Calu3 (cell line): ENCODE measurements at regions of chr17 and their contacts with region 1.

Region 1: GRCh38 chr17:58669853-58670252 is 22.0 kb downstream of the TEX14 start:
- DNase-seq: no peak
- H3K4me3 Mint-ChIP-seq: no peak overlapping the region
- H3K27ac Mint-ChIP-seq: no peak overlapping the region
- H3K4me1 Mint-ChIP-seq: peaks cover 15% of the 10 kb centered on the region
- H3K27me3 Mint-ChIP-seq: no peaks in the 10 kb centered on the region
- CTCF ChIP-seq: no peak

Region 2: GRCh38 chr17:58680038-58680369 is 10.2 kb after region 1 on chr17:
- CTCF ChIA-PET with region 1: no interaction called
- intact Hi-C with region 1: no loop called
- DNase-seq: no peak
- H3K4me3 Mint-ChIP-seq: no peak overlapping the region
- H3K27ac Mint-ChIP-seq: no peak overlapping the region
- H3K4me1 Mint-ChIP-seq: no peaks in the 10 kb centered on the region
- H3K27me3 Mint-ChIP-seq: no peaks in the 10 kb centered on the region
- CTCF ChIP-seq: no peak

Region 3: DNA sequence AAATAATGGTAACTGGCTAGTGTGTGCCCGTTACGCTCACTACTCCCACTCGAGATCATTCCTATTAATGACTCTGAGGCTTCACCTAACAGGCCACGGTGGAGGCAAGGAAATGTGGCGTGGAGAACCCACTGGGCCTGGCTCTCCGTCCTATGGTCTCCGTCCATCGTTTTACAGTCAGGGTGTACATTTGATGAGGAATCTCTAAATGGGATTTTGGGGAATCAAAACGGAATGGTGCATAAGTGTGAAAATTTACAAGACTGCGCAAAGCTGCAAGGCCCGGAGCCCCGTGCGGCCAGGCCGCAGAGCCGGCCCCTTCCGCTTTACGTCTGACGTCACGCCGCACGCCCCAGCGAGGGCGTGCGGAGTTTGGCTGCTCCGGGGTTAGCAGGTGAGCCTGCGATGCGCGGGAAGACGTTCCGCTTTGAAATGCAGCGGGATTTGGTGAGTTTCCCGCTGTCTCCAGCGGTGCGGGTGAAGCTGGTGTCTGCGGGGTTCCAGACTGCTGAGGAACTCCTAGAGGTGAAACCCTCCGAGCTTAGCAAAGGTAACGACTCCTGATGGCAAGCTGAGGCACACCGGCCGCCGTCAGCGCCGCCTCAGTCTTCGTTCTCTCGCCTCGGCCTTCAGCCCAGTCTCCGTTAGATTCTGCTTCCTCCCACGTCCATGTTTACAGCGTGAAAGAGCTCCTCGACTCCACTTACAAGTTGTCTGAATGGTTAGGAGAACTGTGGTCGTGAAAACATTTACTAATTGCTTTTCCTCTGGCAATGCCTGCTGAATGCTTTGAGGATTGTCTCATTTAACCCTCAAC is 22.6 kb after region 1 on chr17 and contains the start of gene RAD51C:
- CTCF ChIA-PET with region 1: interaction called, 13 read pairs
- intact Hi-C with region 1: no loop called
- DNase-seq: peak; percentile 78
- H3K4me3 Mint-ChIP-seq: peak within 1 kb of the TSS; percentile 86
- H3K27ac Mint-ChIP-seq: peak within 1 kb of the TSS; percentile 88
- H3K4me1 Mint-ChIP-seq: no peaks in the 10 kb centered on the region
- H3K27me3 Mint-ChIP-seq: no peaks in the 10 kb centered on the region
- CTCF ChIP-seq: no peak
- total RNA-seq, gene RAD51C: 24.3 and 28.4 TPM in 2 replicates

Region 4: DNA sequence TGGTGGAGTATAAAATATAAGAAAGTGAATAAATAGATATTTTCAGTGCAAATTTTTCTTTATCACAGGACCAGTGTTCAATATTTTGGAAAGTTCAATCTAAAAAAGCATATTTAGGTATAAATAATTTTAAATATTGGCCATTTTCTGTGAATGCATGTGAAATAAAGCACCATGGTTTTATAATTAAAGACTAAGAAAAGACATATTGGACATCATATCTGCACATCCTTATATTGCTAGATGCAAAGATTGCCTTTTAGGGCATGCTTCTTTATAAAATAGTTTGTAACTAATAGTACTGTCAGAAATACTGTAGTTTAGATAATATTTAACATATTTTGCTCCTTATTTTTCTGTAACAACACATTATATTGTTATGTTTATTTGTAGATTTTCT is 104.5 kb after region 1 on chr17:
- CTCF ChIA-PET with region 1: no interaction called
- intact Hi-C with region 1: no loop called
- DNase-seq: no peak
- H3K4me3 Mint-ChIP-seq: no peak overlapping the region
- H3K27ac Mint-ChIP-seq: no peak overlapping the region
- H3K4me1 Mint-ChIP-seq: no peaks in the 10 kb centered on the region
- H3K27me3 Mint-ChIP-seq: no peaks in the 10 kb centered on the region
- CTCF ChIP-seq: no peak